ENCODE measurements at regions of chr9 and their contacts with region 1.

Region 1: GRCh38 chr9:73183917-73184861 is 32.5 kb downstream of the ANXA1 start:
- DNase-seq: peak; percentile 43
- ATAC-seq: no peak
- H3K4me3 ChIP-seq: no peak overlapping the region
- H3K4me3 Mint-ChIP-seq: no peak overlapping the region
- H3K27ac ChIP-seq: no peak overlapping the region
- H3K27ac Mint-ChIP-seq: no peak overlapping the region
- H3K4me1 ChIP-seq: no peaks in the 10 kb centered on the region
- H3K4me1 Mint-ChIP-seq: no peaks in the 10 kb centered on the region
- H3K27me3 ChIP-seq: peaks cover 0 to 5% (median 1%) of the 10 kb centered on the region in 4 experiments
- H3K27me3 Mint-ChIP-seq: peaks cover 9% of the 10 kb centered on the region
- CTCF ChIP-seq: peak; percentile 79

Region 2: DNA sequence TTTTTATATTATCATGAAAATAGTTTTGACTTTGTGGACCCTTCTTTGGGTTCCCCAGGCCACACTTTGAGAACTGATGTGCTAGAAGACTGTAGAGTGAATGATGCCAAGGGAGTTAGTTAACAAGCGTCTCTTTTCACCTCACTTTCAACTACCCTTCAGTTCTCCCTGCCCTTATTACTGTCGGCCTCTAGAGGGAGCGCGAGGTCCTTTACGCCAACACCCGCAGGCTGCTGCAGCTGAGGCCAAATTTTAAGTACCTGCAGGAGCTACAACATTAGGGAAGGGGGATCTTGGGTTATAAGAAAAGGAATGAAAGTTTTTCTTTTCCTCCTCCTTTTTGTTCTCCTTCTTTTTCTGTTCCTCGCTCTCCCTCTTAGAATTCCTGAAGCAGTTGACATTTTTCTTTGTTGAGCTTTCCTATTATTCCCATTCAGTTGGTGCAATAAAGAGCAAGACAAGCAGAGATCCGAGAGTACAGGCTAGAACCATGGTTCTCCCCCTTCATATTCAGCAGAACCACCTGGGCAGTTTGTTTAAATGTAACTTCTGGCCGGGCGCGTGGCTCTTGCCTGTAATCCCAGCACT is 903.2 kb before region 1 on chr9:
- CTCF ChIA-PET with region 1: interaction called, 3 read pairs
- POLR2A ChIA-PET with region 1: no interaction called
- intact Hi-C with region 1: loop called (anchors 5 kb)
- DNase-seq: peak; percentile 78
- ATAC-seq: peak; percentile 81
- H3K4me3 ChIP-seq: no peak overlapping the region
- H3K4me3 Mint-ChIP-seq: no peak overlapping the region
- H3K27ac ChIP-seq: no peak overlapping the region
- H3K27ac Mint-ChIP-seq: no peak overlapping the region
- H3K4me1 ChIP-seq: no peaks in the 10 kb centered on the region
- H3K4me1 Mint-ChIP-seq: no peaks in the 10 kb centered on the region
- H3K27me3 ChIP-seq: peaks cover 0 to 3% (median 0%) of the 10 kb centered on the region in 4 experiments
- H3K27me3 Mint-ChIP-seq: no peaks in the 10 kb centered on the region
- CTCF ChIP-seq: peak; percentile 97

Region 3: DNA sequence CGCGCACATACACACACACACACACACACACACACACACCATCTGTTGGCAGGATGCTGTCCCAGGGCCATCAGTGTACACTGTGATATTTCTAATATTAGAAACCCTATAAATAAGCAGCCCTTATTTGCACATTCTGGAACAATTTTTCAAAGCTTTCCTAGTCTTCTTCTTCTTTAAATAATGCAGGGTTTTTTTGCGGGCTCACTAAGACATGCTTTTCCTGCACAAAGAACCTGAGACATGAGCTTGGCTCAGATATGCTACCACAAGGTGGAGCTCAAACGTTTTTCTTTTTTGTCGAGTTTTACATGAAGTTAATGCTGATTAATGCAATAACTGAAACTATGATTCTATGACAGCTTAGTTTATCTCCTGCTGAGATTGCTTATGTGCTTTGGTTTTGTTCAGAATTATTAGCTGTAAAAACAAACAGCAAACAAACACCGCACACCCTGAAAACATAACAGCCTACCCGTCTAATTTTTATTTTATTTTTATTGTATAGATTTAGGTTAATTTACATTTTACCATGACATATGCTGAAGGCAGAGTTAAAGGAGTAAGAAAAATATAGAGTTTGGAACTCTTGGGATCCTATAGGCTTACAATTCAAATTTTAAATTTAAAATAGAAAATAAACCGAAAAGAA is 327.1 kb before region 1 on chr9:
- CTCF ChIA-PET with region 1: interaction called, 3 read pairs
- POLR2A ChIA-PET with region 1: no interaction called
- intact Hi-C with region 1: loop called (anchors 5 kb)
- DNase-seq: peak; percentile 34
- ATAC-seq: no peak
- H3K4me3 ChIP-seq: no peak overlapping the region
- H3K4me3 Mint-ChIP-seq: no peak overlapping the region
- H3K27ac ChIP-seq: no peak overlapping the region
- H3K27ac Mint-ChIP-seq: no peak overlapping the region
- H3K4me1 ChIP-seq: no peaks in the 10 kb centered on the region
- H3K4me1 Mint-ChIP-seq: peaks cover 5% of the 10 kb centered on the region
- H3K27me3 ChIP-seq: no peaks in the 10 kb centered on the region
- H3K27me3 Mint-ChIP-seq: no peaks in the 10 kb centered on the region
- CTCF ChIP-seq: peak; percentile 36

Region 4: DNA sequence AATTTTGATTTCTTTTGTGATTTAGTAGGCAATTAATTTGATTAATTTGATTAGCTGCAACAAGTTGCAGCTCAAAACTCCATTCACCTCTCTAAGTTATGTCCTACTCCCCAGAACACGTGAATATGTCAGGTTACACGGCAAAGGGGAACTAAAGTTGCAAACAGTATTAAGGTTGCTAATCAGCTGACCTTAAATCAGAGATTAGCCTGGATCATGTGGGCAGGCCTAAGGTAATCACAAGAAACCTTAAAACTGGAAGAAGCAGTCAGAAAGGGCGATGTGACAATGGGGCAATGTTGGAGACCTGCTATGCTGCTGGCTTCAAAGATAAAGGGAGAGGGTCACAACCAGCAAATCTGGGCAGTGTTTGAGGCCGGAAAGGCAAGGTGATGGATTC is 79.8 kb before region 1 on chr9:
- CTCF ChIA-PET with region 1: interaction called, 65 read pairs
- POLR2A ChIA-PET with region 1: no interaction called
- intact Hi-C with region 1: loop called (anchors 1 kb)
- DNase-seq: no peak
- ATAC-seq: no peak
- H3K4me3 ChIP-seq: no peak overlapping the region
- H3K4me3 Mint-ChIP-seq: no peak overlapping the region
- H3K27ac ChIP-seq: no peak overlapping the region
- H3K27ac Mint-ChIP-seq: no peak overlapping the region
- H3K4me1 ChIP-seq: no peaks in the 10 kb centered on the region
- H3K4me1 Mint-ChIP-seq: no peaks in the 10 kb centered on the region
- H3K27me3 ChIP-seq: no peaks in the 10 kb centered on the region
- H3K27me3 Mint-ChIP-seq: no peaks in the 10 kb centered on the region
- CTCF ChIP-seq: no peak

Region 5: DNA sequence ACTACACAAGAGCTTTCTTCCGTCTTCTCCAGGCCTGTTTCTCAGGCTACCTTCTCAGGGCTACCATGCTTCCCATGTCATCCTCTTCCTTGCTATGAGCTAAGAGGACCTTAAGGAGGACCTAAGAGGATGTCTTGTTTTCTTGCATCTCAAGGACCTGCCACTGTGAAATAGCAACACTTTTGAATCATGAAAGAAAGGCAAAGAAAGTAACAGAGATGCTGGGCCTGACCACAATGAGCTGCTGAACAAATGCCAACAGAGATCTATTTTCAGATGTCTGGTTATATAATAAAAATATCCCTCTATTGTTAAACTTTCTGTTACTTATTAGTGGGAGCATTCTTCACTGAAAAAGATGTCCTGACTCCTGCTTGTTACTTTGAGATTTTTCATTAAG is 69.2 kb before region 1 on chr9:
- CTCF ChIA-PET with region 1: interaction called, 65 read pairs
- POLR2A ChIA-PET with region 1: no interaction called
- intact Hi-C with region 1: no loop called
- DNase-seq: no peak
- ATAC-seq: no peak
- H3K4me3 ChIP-seq: no peak overlapping the region
- H3K4me3 Mint-ChIP-seq: no peak overlapping the region
- H3K27ac ChIP-seq: no peak overlapping the region
- H3K27ac Mint-ChIP-seq: no peak overlapping the region
- H3K4me1 ChIP-seq: no peaks in the 10 kb centered on the region
- H3K4me1 Mint-ChIP-seq: no peaks in the 10 kb centered on the region
- H3K27me3 ChIP-seq: no peaks in the 10 kb centered on the region
- H3K27me3 Mint-ChIP-seq: peaks cover 7% of the 10 kb centered on the region
- CTCF ChIP-seq: no peak

Region 6: GRCh38 chr9:73137286-73137899 is 46.8 kb before region 1 on chr9:
- CTCF ChIA-PET with region 1: no interaction called
- POLR2A ChIA-PET with region 1: no interaction called
- intact Hi-C with region 1: loop called (anchors 5 kb)
- DNase-seq: no peak
- ATAC-seq: no peak
- H3K4me3 ChIP-seq: no peak overlapping the region
- H3K4me3 Mint-ChIP-seq: no peak overlapping the region
- H3K27ac ChIP-seq: no peak overlapping the region
- H3K27ac Mint-ChIP-seq: no peak overlapping the region
- H3K4me1 ChIP-seq: no peaks in the 10 kb centered on the region
- H3K4me1 Mint-ChIP-seq: peaks cover 4% of the 10 kb centered on the region
- H3K27me3 ChIP-seq: no peaks in the 10 kb centered on the region
- H3K27me3 Mint-ChIP-seq: no peaks in the 10 kb centered on the region
- CTCF ChIP-seq: no peak

Region 7: DNA sequence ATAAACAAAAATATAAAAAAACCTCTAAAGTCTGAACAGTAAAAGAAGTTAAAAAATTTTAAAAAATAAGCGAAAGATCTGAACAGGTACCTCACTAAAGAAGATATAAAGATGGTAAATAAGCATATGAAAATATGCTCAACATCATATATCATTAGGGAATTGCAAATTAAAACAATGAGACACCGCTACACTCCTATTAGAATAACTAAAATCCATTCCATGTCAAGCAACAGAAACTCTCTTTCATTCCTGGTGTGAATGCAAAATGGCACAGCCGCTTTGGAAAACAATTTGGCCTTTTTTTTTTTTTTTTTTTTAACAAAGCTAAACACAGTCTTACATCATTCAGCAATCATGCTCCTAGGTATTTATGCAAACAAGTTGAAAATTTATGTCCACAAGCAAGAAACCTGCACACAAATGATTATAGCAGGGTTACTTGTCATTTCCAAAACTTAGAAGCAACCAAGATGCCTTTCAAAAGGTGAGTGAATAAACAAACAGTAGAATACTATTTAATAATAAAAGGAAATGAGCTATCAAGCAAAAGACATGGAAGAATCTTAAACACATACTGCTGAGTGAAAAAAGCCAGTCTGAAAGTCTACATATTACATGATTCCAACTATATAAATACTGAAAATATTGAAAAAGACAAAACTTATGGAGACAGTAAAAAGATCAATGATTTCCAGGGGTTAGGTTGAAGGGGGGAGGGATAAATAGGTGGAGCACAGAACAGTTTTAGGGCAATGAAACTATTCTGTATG is 10.4 kb before region 1 on chr9:
- CTCF ChIA-PET with region 1: interaction called, 10 read pairs
- POLR2A ChIA-PET with region 1: no interaction called
- intact Hi-C with region 1: no loop called
- DNase-seq: no peak
- ATAC-seq: no peak
- H3K4me3 ChIP-seq: no peak overlapping the region
- H3K4me3 Mint-ChIP-seq: no peak overlapping the region
- H3K27ac ChIP-seq: no peak overlapping the region
- H3K27ac Mint-ChIP-seq: no peak overlapping the region
- H3K4me1 ChIP-seq: no peaks in the 10 kb centered on the region
- H3K4me1 Mint-ChIP-seq: no peaks in the 10 kb centered on the region
- H3K27me3 ChIP-seq: no peaks in the 10 kb centered on the region
- H3K27me3 Mint-ChIP-seq: peaks cover 12% of the 10 kb centered on the region
- CTCF ChIP-seq: no peak

Measured in B cell (primary cell).